ENCODE measurements at regions of chr11 and their contacts with region 1.

Region 1: GRCh38 chr11:43920598-43921419 is 21.6 kb upstream of the C11orf96 start:
- DNase-seq: peak; percentile 100
- H3K4me3 ChIP-seq: no peak overlapping the region
- H3K27ac ChIP-seq: peak overlapping the region; percentile 94
- H3K27me3 ChIP-seq: no peaks in the 10 kb centered on the region
- CTCF ChIP-seq: no peak

Region 2: DNA sequence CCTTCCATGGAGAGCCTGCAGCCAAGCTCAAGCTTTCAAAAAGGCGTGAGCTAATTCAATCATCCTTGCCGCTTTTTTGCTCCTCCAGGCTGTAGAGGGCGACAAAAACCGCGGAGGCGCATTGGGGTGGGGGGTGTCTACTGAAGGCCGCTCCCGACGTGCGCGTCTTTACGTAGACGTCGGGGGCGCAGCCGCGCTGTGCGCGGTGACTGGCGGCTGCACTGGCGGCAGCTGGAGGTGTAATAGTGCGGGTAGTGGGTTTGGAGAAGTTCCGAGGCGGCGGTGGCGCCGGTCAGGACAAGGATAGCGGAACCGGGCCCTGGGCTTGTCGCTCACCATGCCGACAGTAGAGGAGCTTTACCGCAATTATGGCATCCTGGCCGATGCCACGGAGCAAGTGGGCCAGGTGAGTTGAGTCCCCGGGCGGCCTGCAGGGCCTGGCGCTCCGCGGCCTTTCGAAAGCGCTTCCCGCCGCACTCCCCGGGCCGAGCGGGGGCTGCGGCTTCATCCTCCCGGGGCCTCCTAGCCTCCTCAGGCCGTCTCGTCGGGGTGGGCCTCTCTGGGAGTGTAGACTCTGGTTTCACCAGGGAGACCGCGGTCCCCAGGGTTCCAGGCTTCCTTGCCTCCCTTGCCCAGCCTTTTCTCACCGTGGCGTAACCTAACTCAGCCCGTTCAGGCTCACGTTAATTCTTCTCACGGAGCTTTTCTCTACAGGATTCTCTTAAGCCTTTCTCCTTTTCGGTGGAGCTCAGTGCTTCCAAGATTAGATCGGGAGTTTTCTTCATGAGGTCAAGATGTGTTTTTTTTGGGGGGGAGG is 608.8 kb before region 1 on chr11 and contains the start of gene API5:
- in situ Hi-C with region 1: no loop called
- DNase-seq: peak; percentile 94
- H3K4me3 ChIP-seq: peak within 1 kb of the TSS; percentile 90
- H3K27ac ChIP-seq: peak within 1 kb of the TSS; percentile 76
- H3K27me3 ChIP-seq: no peaks in the 10 kb centered on the region
- CTCF ChIP-seq: peak; percentile 88

Region 3: GRCh38 chr11:44036811-44037657 is 116.2 kb after region 1 on chr11:
- in situ Hi-C with region 1: loop called (anchors 25 kb)
- DNase-seq: peak; percentile 90
- H3K4me3 ChIP-seq: no peak overlapping the region
- H3K27ac ChIP-seq: no peak overlapping the region
- H3K27me3 ChIP-seq: no peaks in the 10 kb centered on the region
- CTCF ChIP-seq: peak; percentile 94